ENCODE measurements at regions of chr6 and their contacts with region 1.

Region 1: DNA sequence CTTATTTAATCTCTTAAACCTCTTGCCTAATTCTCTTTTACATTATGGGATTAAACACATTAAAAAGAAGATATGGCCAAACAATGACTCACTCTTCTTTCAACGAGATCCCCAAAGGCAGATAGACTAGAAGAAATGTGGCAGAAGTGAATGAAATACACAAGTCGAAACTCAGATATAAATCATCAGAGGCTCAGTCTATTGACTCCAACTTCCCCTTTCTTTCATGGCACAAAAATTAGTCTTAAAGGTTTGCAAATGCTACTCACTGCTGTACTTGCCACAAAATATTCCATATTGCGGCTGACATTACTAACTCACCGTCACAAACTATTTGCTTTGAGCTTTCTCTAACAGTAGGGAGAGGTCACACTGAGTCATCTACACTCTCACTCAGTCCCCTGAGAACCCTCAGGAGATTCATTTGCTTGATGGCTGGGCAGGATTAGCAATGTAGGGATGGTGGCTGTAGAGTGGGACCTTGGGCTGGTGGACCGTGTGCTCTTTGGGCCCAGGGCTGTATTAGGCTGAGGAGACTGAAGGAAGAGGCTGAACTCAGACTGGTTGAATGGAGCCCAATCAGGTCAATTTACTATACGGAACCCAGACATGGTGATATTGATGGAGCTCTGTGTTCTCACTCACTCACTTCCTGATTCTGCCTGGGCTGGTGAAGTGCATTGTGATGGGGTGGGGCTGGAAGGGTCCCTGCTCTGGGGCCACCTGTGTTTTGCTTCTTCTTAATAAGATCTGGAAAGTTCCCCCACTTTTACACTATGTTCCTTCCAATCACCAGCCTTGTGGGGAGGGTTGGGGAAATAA is 42.8 kb upstream of the UBR2 start:
- DNase-seq: peak; percentile 56
- H3K4me3 Mint-ChIP-seq: no peak overlapping the region
- H3K27ac Mint-ChIP-seq: peak overlapping the region; percentile 38
- H3K4me1 Mint-ChIP-seq: peaks cover 18% of the 10 kb centered on the region
- H3K27me3 Mint-ChIP-seq: no peaks in the 10 kb centered on the region

Region 2: DNA sequence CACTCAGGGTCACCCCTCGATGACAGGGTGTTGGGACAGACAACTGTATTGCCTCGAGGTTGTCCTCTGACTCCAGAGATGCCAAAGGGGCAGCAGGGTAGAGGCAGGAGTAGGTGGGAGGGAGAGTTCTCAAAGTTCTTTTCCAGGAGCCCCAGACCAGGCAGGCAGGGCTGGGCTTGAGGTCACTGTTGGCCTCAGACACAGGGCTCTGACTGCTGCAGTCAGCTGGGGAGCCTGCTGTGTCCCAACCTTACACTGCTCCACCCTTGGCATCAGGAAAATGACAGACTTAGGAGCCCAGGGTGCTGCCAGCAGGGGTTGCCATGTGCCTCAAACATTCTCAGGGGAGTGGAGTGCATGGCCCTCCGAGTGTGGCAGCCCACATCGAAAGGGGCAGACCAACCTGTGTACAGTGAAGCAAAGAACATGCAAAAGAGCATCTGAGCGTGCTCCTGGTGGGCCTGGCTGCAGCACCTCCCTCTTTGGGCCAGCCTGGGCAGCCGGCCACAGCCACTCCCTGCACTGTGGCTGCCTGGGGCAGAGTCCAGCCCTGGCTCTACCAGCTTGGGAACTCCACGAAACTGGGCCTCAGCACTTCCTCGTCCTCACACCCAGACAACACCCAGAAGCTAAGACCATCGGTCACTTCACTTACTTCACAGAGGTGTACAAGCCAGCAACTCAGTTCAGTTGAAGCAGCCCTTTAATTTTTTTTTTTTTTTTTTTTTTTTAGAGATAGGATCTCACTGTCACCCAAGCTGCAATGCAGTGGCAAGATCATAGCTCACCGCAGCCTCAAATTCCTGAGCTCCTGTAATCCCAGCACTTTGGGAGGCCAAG is 402.6 kb before region 1 on chr6:
- CTCF ChIA-PET with region 1: no interaction called
- intact Hi-C with region 1: no loop called
- DNase-seq: no peak
- H3K4me3 Mint-ChIP-seq: no peak overlapping the region
- H3K27ac Mint-ChIP-seq: no peak overlapping the region
- H3K4me1 Mint-ChIP-seq: no peaks in the 10 kb centered on the region
- H3K27me3 Mint-ChIP-seq: peaks cover 6% of the 10 kb centered on the region

Region 3: DNA sequence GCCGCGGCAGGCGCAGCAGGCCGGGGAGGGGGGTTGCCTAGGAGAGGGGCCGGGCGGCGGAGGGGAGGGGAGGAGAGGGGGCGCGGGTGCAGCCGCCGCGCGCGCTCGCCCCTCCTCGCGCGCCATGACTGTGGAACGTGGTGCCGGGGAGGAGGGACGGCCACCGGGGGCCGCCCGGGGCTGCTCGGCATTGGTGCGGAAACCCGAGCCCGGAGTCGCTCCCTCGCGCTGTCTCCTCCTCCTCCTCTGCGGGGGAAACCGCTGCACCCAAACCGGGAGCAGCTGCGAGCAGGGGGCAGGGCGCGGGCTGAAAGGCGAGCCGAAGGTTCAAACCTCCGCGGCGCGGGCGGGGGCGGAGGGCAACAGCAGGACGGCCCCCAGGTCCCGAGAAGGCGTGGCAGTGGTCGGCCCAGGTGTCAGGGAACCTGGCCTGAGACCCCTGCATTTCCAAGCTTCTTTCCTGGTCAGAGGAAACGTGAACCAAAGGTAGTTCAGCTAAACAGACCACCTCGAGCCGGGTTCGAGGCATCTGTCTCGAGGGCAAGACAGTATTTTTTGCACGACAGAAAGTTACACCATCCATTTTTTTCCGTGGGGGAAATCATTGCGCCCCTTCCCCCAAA is 67.9 kb before region 1 on chr6:
- CTCF ChIA-PET with region 1: no interaction called
- intact Hi-C with region 1: loop called (anchors 2 kb)
- DNase-seq: peak; percentile 87
- H3K4me3 Mint-ChIP-seq: peak overlapping the region; percentile 88
- H3K27ac Mint-ChIP-seq: peak overlapping the region; percentile 81
- H3K4me1 Mint-ChIP-seq: peaks cover 32% of the 10 kb centered on the region
- H3K27me3 Mint-ChIP-seq: peaks cover 7% of the 10 kb centered on the region

Region 4: GRCh38 chr6:42503894-42504293 is 17.1 kb before region 1 on chr6:
- CTCF ChIA-PET with region 1: no interaction called
- intact Hi-C with region 1: loop called (anchors 2 kb)
- DNase-seq: no peak
- H3K4me3 Mint-ChIP-seq: no peak overlapping the region
- H3K27ac Mint-ChIP-seq: no peak overlapping the region
- H3K4me1 Mint-ChIP-seq: peaks cover 13% of the 10 kb centered on the region
- H3K27me3 Mint-ChIP-seq: no peaks in the 10 kb centered on the region